Breast epithelium (tissue), 4 donors: ENCODE measurements at regions of chr17 and their contacts with region 1.

Region 1: GRCh38 chr17:4509401-4509800 is 10.7 kb downstream of the SPNS2 start:
- DNase-seq: peak in 1 of 2 donors; percentile 70
- H3K4me3 ChIP-seq: peak overlapping the region in 1 of 3 donors; percentile 2
- H3K27ac ChIP-seq: peak overlapping the region; percentile 80 to 86
- H3K4me1 ChIP-seq: peaks cover 0 to 29% of the 10 kb centered on the region in 2 donors
- H3K27me3 ChIP-seq: no peaks in the 10 kb centered on the region
- CTCF ChIP-seq: peak in 1 of 3 donors; percentile 30
- POLR2A ChIP-seq: no peak

Region 2: DNA sequence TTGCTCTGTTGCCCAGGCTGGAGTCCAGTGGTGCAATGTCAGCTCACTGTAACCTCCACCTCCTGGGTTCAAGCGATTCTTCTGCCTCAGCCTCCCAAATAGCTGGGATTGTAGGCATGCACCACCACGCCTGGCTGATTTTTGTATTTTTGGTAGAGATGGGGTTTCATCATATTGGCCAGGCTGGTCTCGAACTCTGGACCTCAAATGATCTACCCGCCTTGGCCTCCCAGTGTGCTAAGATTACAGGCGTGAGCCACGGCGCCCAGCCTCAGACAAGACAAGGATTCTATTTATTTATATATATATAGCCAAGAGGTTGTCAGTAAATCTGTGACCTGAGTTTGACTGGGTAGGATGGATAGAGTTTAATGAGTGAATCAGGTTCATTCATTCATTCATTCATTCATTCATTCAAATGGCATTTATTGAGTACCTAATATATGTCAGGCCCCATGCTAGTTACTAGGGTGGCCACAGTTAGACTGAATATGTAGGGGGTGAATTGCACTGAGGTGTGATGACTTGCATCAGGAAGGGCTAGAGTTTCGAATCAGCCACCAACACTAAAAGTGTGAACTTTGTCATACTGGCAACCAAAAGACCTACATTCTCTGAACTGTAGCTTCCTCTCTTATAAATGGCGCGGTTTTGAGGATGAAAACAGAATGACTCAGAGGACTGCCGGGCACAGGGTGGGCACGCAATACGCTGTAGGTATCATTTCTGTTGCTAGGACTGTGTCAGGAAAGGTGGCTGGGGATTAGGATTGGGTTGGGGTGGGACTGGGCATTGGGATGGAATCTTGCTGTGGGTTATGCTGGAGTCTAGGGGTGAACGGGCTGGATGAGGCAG is 746.3 kb before region 1 on chr17:
- intact Hi-C with region 1: loop called (anchors 5 kb)
- DNase-seq: no peak
- H3K4me3 ChIP-seq: no peak overlapping the region
- H3K27ac ChIP-seq: no peak overlapping the region
- H3K4me1 ChIP-seq: no peaks in the 10 kb centered on the region
- H3K27me3 ChIP-seq: peaks cover 0 to 9% of the 10 kb centered on the region in 2 donors
- CTCF ChIP-seq: no peak
- POLR2A ChIP-seq: no peak

Region 3: GRCh38 chr17:4520894-4521600 is 11.6 kb after region 1 on chr17:
- intact Hi-C with region 1: no loop called
- DNase-seq: peak in 1 of 2 donors; percentile 82
- H3K4me3 ChIP-seq: no peak overlapping the region
- H3K27ac ChIP-seq: peak overlapping the region; percentile 88 to 94
- H3K4me1 ChIP-seq: peaks cover 0 to 19% of the 10 kb centered on the region in 2 donors
- H3K27me3 ChIP-seq: no peaks in the 10 kb centered on the region
- CTCF ChIP-seq: no peak
- POLR2A ChIP-seq: no peak

Region 4: GRCh38 chr17:4547971-4548461 is 38.6 kb after region 1 on chr17:
- intact Hi-C with region 1: loop called (anchors 1 kb)
- DNase-seq: no peak
- H3K4me3 ChIP-seq: no peak overlapping the region
- H3K27ac ChIP-seq: no peak overlapping the region
- H3K4me1 ChIP-seq: peaks cover 0 to 7% of the 10 kb centered on the region in 2 donors
- H3K27me3 ChIP-seq: no peaks in the 10 kb centered on the region
- CTCF ChIP-seq: no peak
- POLR2A ChIP-seq: no peak